ENCODE measurements at regions of chr6 and their contacts with region 1.

Region 1: GRCh38 chr6:74409447-74409846 is 713.4 kb downstream of the CD109 start:
- DNase-seq: peak; percentile 31
- ATAC-seq: peak; percentile 76
- H3K4me3 ChIP-seq: no peak overlapping the region
- H3K27ac ChIP-seq: no peak overlapping the region
- H3K4me1 ChIP-seq: no peaks in the 10 kb centered on the region
- H3K27me3 ChIP-seq: no peaks in the 10 kb centered on the region
- CTCF ChIP-seq: peak; percentile 21 to 58 (median 58); a peak in 4 of 6 replicates
- POLR2A ChIP-seq: no peak
- RAD21 ChIP-seq: peak; percentile 84

Region 2: GRCh38 chr6:73739096-73739495 is 670.4 kb before region 1 on chr6:
- CTCF ChIA-PET with region 1: no interaction called
- POLR2A ChIA-PET with region 1: no interaction called
- RAD21 ChIA-PET with region 1: no interaction called
- intact Hi-C with region 1: loop called (anchors 2 kb)
- DNase-seq: peak; percentile 52
- ATAC-seq: peak; percentile 67
- H3K4me3 ChIP-seq: no peak overlapping the region
- H3K27ac ChIP-seq: no peak overlapping the region
- H3K4me1 ChIP-seq: no peaks in the 10 kb centered on the region; a peak in 1 of 4 replicates
- H3K27me3 ChIP-seq: no peaks in the 10 kb centered on the region
- CTCF ChIP-seq: peak; percentile 64 to 86 (median 71); a peak in 5 of 6 replicates
- POLR2A ChIP-seq: no peak
- RAD21 ChIP-seq: peak; percentile 84

Region 3: GRCh38 chr6:74574794-74575193 is 165.3 kb after region 1 on chr6:
- CTCF ChIA-PET with region 1: no interaction called
- POLR2A ChIA-PET with region 1: no interaction called
- RAD21 ChIA-PET with region 1: no interaction called
- intact Hi-C with region 1: loop called (anchors 1 kb)
- DNase-seq: peak; percentile 24
- ATAC-seq: peak; percentile 90
- H3K4me3 ChIP-seq: no peak overlapping the region
- H3K27ac ChIP-seq: no peak overlapping the region
- H3K4me1 ChIP-seq: no peaks in the 10 kb centered on the region
- H3K27me3 ChIP-seq: no peaks in the 10 kb centered on the region
- CTCF ChIP-seq: peak; percentile 35 to 67 (median 64); a peak in 5 of 6 replicates
- POLR2A ChIP-seq: no peak
- RAD21 ChIP-seq: peak; percentile 56

Region 4: GRCh38 chr6:74598473-74599393 is 189.3 kb after region 1 on chr6:
- CTCF ChIA-PET with region 1: no interaction called
- POLR2A ChIA-PET with region 1: no interaction called
- RAD21 ChIA-PET with region 1: no interaction called
- intact Hi-C with region 1: loop called (anchors 5 kb)
- DNase-seq: no peak
- ATAC-seq: no peak
- H3K4me3 ChIP-seq: no peak overlapping the region
- H3K27ac ChIP-seq: no peak overlapping the region
- H3K4me1 ChIP-seq: no peaks in the 10 kb centered on the region
- H3K27me3 ChIP-seq: no peaks in the 10 kb centered on the region
- CTCF ChIP-seq: no peak
- POLR2A ChIP-seq: no peak
- RAD21 ChIP-seq: no peak